ENCODE measurements at regions of chr2 and their contacts with region 1.

Region 1: DNA sequence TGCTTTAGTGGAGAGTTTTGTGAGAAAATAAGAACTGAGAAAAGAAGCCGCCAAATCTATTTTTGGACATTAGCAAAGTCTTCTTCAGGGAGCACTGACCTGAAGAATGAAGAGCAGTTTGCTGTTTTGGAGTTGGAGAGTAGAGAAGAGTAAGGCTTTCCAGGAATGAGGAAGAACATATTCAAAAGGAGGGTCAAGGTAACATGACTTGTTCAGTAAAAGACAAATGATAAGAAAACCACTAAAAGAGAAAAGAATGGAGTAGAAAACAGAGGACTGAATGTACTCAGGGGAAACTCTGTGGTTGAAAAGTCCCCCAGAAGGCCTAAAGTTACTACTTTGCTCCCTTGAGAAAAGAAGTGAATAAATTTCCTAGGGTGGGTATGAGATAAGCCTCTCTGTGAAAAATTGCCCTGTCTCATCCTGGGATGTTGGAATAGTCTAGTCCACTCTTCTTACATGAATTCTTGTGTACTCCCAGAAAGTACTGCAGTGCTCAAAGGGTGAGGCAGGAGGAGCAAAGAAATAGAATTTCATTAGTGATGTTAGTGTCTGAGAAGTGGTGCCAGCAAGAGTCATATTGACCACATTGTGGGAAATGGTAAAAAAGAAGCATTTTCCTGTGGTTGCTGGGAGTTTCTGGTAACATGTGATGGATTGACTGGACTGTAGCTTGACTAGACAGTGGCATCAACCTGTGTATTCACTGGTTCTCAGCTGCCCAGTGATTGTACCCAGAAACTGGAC is 27.8 kb downstream of the MBD5 start:
- DNase-seq: no peak
- ATAC-seq: peak; percentile 85
- H3K4me3 Mint-ChIP-seq: peak overlapping the region; percentile 42
- H3K27ac Mint-ChIP-seq: peak overlapping the region; percentile 68
- H3K4me1 Mint-ChIP-seq: peaks cover 48% of the 10 kb centered on the region
- H3K27me3 Mint-ChIP-seq: no peaks in the 10 kb centered on the region
- CTCF ChIP-seq: no peak

Region 2: GRCh38 chr2:148071351-148071750 is 22.7 kb after region 1 on chr2:
- CTCF ChIA-PET with region 1: no interaction called
- POLR2A ChIA-PET with region 1: interaction called, 12 read pairs
- intact Hi-C with region 1: no loop called
- DNase-seq: no peak
- ATAC-seq: no peak
- H3K4me3 Mint-ChIP-seq: no peak overlapping the region
- H3K27ac Mint-ChIP-seq: no peak overlapping the region
- H3K4me1 Mint-ChIP-seq: no peaks in the 10 kb centered on the region
- H3K27me3 Mint-ChIP-seq: no peaks in the 10 kb centered on the region
- CTCF ChIP-seq: no peak